ENCODE measurements at regions of chr10 and their contacts with region 1.

Region 1: GRCh38 chr10:122374237-122374869 is at the start of gene PLEKHA1:
- DNase-seq: peak; percentile 95
- ATAC-seq: peak; percentile 85
- H3K4me3 ChIP-seq: peak within 1 kb of the TSS; percentile 45 to 84 (median 76)
- H3K4me3 Mint-ChIP-seq: peak within 1 kb of the TSS; percentile 92
- H3K27ac ChIP-seq: peak within 1 kb of the TSS; percentile 88 to 97
- H3K27ac Mint-ChIP-seq: peak within 1 kb of the TSS; percentile 98
- H3K4me1 ChIP-seq: peaks cover 13 to 17% of the 10 kb centered on the region in 2 donors
- H3K4me1 Mint-ChIP-seq: peaks cover 28% of the 10 kb centered on the region
- H3K27me3 ChIP-seq: peaks cover 0 to 31% (median 20%) of the 10 kb centered on the region in 4 experiments
- H3K27me3 Mint-ChIP-seq: peaks cover 26% of the 10 kb centered on the region
- CTCF ChIP-seq: no peak
- total RNA-seq, gene PLEKHA1: 28.5 and 34.0 TPM in 2 replicates

Region 2: GRCh38 chr10:121974535-121975294 is 399.6 kb before region 1 on chr10 and contains the start of gene NSMCE4A:
- CTCF ChIA-PET with region 1: no interaction called
- POLR2A ChIA-PET with region 1: no interaction called
- intact Hi-C with region 1: loop called (anchors 2 kb)
- DNase-seq: peak; percentile 81
- ATAC-seq: peak; percentile 83
- H3K4me3 ChIP-seq: peak within 1 kb of the TSS; percentile 51 to 93 (median 79)
- H3K4me3 Mint-ChIP-seq: peak within 1 kb of the TSS; percentile 81
- H3K27ac ChIP-seq: peak within 1 kb of the TSS; percentile 50 to 78
- H3K27ac Mint-ChIP-seq: peak within 1 kb of the TSS; percentile 70
- H3K4me1 ChIP-seq: peaks cover 11 to 17% of the 10 kb centered on the region in 2 donors
- H3K4me1 Mint-ChIP-seq: peaks cover 20% of the 10 kb centered on the region
- H3K27me3 ChIP-seq: no peaks in the 10 kb centered on the region
- H3K27me3 Mint-ChIP-seq: no peaks in the 10 kb centered on the region
- CTCF ChIP-seq: peak; percentile 46
- total RNA-seq, gene NSMCE4A: 89.7 and 91.0 TPM in 2 replicates

Region 3: DNA sequence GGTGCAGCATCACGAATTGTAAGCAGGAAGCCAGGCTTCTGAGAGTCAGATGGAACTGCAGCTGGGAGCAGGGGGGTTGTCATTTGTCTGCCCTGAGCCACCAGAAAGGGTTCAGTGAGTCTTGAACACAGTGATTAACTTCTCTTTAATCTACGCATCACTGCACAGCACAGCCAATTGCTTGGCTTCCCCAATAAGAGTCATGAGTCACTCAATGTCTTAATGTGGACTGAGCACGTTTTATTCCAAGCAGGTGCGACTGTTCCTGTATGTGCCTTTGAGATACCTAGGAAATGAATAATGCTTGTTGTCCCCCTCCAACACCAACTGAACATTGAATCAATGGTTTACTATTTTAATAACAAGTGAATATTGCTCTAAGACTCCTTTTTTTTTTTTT is 25.8 kb before region 1 on chr10:
- CTCF ChIA-PET with region 1: interaction called, 11 read pairs
- POLR2A ChIA-PET with region 1: interaction called, 10 read pairs
- intact Hi-C with region 1: loop called (anchors 2 kb)
- DNase-seq: peak; percentile 60
- ATAC-seq: peak; percentile 97
- H3K4me3 ChIP-seq: no peak overlapping the region
- H3K4me3 Mint-ChIP-seq: no peak overlapping the region
- H3K27ac ChIP-seq: no peak overlapping the region
- H3K27ac Mint-ChIP-seq: no peak overlapping the region
- H3K4me1 ChIP-seq: peaks cover 13 to 17% of the 10 kb centered on the region in 2 donors
- H3K4me1 Mint-ChIP-seq: peaks cover 14% of the 10 kb centered on the region
- H3K27me3 ChIP-seq: peaks cover 0 to 10% (median 1%) of the 10 kb centered on the region in 4 experiments
- H3K27me3 Mint-ChIP-seq: peaks cover 35% of the 10 kb centered on the region
- CTCF ChIP-seq: no peak

Region 4: DNA sequence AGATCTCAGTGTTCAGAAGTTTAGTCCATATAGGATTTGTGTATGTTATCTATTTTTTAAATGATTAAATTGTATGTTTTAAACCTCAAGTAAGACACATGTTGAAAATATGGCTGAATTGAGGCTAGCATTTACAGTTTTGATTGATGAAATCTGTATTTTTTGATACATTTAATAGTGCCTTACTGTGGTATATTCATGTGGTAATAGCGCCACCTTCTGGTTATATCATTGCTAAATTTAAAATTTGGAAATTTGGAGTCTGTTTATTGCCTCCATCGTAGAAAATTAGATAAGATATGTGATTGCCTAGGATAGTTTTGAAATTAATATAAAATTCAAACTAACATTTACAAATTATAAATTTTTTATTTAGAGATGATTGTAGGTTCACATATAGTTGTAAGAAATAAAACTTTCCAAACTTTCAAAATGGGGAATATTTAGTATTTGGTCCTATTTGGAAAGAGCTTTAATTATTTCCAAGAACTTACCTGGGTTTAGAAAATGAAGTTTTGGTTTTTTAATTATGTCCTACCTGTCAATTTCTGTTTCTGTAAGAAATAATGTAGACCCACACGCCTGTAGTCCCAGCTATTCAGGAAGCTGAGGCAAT is 61.0 kb after region 1 on chr10:
- CTCF ChIA-PET with region 1: interaction called, 12 read pairs
- POLR2A ChIA-PET with region 1: no interaction called
- intact Hi-C with region 1: no loop called
- DNase-seq: peak; percentile 66
- ATAC-seq: no peak
- H3K4me3 ChIP-seq: no peak overlapping the region
- H3K4me3 Mint-ChIP-seq: no peak overlapping the region
- H3K27ac ChIP-seq: no peak overlapping the region
- H3K27ac Mint-ChIP-seq: no peak overlapping the region
- H3K4me1 ChIP-seq: no peaks in the 10 kb centered on the region
- H3K4me1 Mint-ChIP-seq: peaks cover 3% of the 10 kb centered on the region
- H3K27me3 ChIP-seq: no peaks in the 10 kb centered on the region
- H3K27me3 Mint-ChIP-seq: no peaks in the 10 kb centered on the region
- CTCF ChIP-seq: peak; percentile 88

Region 5: DNA sequence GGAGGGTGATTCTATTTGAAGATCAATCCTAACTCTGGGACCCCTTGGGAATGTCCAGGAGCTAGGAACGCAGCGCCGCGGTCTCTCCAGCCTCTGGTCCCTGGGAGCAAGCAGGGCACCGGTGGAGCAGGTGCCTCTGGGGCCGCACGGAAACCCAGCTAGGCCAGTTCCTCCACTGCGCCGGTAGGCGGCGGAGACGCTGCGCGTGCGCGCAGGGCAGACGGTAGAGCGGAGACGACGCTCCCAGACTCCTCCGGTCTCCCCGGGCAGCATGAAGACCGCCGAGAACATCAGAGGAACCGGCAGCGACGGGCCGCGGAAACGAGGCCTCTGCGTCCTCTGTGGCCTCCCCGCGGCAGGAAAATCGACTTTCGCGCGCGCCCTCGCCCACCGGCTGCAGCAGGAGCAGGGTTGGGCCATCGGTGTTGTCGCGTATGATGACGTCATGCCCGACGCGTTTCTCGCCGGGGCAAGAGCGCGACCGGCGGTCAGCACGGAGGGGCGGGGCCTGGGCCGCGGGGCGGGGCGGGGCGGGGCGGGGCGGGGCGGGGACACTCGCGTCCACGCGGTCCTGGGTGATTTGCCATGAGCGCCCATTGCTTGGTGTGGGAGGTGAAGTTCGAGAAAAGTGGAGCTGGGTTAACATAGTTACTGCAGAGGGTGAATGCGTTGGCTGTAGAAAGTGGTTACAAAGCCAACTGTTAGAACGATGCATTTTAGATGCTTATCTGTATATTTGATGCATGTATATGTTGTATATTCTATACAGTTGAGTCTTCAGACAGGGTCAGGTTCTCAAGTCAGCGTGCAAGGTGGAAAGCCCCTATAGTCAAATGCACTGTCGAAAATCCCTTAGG is 606.1 kb after region 1 on chr10 and contains the start of gene PSTK:
- CTCF ChIA-PET with region 1: no interaction called
- POLR2A ChIA-PET with region 1: no interaction called
- intact Hi-C with region 1: loop called (anchors 1 kb)
- DNase-seq: peak; percentile 98
- ATAC-seq: peak; percentile 95
- H3K4me3 ChIP-seq: peak within 1 kb of the TSS; percentile 55 to 86 (median 64)
- H3K4me3 Mint-ChIP-seq: peak within 1 kb of the TSS; percentile 97
- H3K27ac ChIP-seq: peak within 1 kb of the TSS; percentile 81 to 89
- H3K27ac Mint-ChIP-seq: peak within 1 kb of the TSS; percentile 99
- H3K4me1 ChIP-seq: peaks cover 10 to 15% of the 10 kb centered on the region in 2 donors
- H3K4me1 Mint-ChIP-seq: peaks cover 14% of the 10 kb centered on the region
- H3K27me3 ChIP-seq: no peaks in the 10 kb centered on the region
- H3K27me3 Mint-ChIP-seq: peaks cover 5% of the 10 kb centered on the region
- CTCF ChIP-seq: peak; percentile 97
- total RNA-seq, gene PSTK: 8.2 and 8.5 TPM in 2 replicates

Measured in B cell (primary cell).